CD8-positive, alpha-beta memory T cell (primary cell): ENCODE measurements at regions of chr19 and their contacts with region 1.

Region 1: DNA sequence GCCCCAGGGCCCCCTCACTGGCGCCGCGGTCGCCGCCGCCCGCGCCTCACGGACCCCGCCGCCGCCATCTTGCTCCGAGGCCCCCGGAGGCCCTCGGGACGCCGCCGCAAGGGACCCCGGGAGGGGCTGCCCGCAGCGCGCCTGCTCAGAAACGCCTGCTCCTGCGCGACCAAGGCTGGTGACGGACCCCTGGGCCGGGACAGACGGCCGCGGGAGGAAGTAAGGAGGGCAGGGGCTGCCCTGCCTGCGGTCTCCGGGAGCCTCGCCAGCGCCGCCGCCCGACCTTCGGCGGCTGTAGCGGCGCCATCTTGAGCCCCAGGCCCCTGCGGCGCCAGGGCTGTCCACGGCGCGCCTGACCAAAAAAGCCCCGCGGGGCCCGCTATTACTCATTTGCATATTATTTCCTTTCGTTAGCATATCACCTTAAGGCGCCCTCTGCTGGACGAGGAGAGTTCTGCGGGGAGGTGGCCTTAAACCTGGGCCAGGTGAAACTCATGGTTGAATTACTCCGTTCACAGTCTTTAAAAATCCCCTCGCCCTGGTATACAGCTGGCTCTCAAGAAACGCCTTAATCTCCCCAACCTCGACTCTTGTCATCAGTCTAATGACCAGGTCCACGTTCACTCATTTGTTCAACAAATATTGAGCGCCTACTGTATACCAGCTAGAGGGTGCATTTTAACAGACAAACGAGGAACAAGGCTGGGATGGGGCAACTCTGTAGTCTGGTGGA is at the start of gene REXO1:
- DNase-seq: peak; percentile 95 to 99 (median 97)
- H3K4me3 ChIP-seq: peak within 1 kb of the TSS; percentile 83
- H3K4me3 Mint-ChIP-seq: peak within 1 kb of the TSS; percentile 86 to 96 (median 88)
- H3K27ac ChIP-seq: peak within 1 kb of the TSS; percentile 94
- H3K27ac Mint-ChIP-seq: peak within 1 kb of the TSS; percentile 88 to 97 (median 93)
- H3K4me1 ChIP-seq: peaks cover 59% of the 10 kb centered on the region
- H3K4me1 Mint-ChIP-seq: peaks cover 39 to 70% (median 49%) of the 10 kb centered on the region in 3 donors
- H3K27me3 ChIP-seq: no peaks in the 10 kb centered on the region
- H3K27me3 Mint-ChIP-seq: peaks cover 0 to 3% of the 10 kb centered on the region in 2 donors
- total RNA-seq, gene REXO1: 61.0 to 63.7 TPM

Region 2: GRCh38 chr19:1837625-1838105 is 10.9 kb before region 1 on chr19:
- CTCF ChIA-PET with region 1: interaction called, 13 read pairs
- POLR2A ChIA-PET with region 1: no interaction called
- DNase-seq: peak in 4 of 5 donors; percentile 46 to 66 (median 52)
- H3K4me3 ChIP-seq: no peak overlapping the region
- H3K4me3 Mint-ChIP-seq: peak overlapping the region in 1 of 7 donors; percentile 68
- H3K27ac ChIP-seq: peak overlapping the region; percentile 70
- H3K27ac Mint-ChIP-seq: peak overlapping the region in 1 of 8 donors; percentile 14
- H3K4me1 ChIP-seq: peaks cover 7% of the 10 kb centered on the region
- H3K4me1 Mint-ChIP-seq: peaks cover 24 to 60% (median 27%) of the 10 kb centered on the region in 3 donors
- H3K27me3 ChIP-seq: no peaks in the 10 kb centered on the region
- H3K27me3 Mint-ChIP-seq: no peaks in the 10 kb centered on the region

Region 3: DNA sequence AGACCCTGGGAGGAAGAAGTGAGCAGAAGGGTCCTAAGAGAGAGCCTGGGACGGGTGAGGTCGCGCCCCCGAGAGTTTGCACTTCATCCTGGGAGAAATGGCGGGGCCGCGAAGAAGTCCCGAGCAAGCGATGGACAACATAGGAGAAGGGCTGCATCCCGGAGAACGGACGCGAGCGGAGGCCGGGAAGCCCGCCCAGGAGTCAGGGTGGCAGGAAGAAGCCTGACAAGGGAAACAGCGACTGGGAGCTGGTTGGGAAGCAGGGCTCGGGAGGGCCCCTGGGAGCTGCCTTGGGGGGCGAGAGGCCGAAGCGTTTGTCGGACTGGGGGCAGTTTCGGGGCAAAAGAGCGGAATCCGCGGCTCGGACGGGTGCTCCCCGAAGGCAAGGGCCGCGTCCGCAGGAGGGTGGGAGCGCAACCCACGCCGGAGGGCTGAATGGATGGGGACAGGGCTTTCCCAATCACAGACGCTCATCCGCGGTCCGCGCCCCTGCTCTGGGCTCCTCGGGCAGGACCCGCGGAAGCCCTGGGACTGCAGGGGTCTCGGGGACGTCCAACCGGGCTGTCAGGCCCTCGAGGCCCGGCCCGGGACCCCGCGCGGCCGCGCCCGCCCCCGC is 36.3 kb after region 1 on chr19:
- CTCF ChIA-PET with region 1: no interaction called
- POLR2A ChIA-PET with region 1: no interaction called
- DNase-seq: no peak
- H3K4me3 ChIP-seq: peak overlapping the region; percentile 70
- H3K4me3 Mint-ChIP-seq: peak overlapping the region; percentile 94 to 100 (median 99)
- H3K27ac ChIP-seq: peak overlapping the region; percentile 96
- H3K27ac Mint-ChIP-seq: peak overlapping the region; percentile 96 to 100 (median 100)
- H3K4me1 ChIP-seq: peaks cover 34% of the 10 kb centered on the region
- H3K4me1 Mint-ChIP-seq: peaks cover 26 to 44% (median 28%) of the 10 kb centered on the region in 3 donors
- H3K27me3 ChIP-seq: no peaks in the 10 kb centered on the region
- H3K27me3 Mint-ChIP-seq: peaks cover 0 to 10% of the 10 kb centered on the region in 2 donors

Region 4: DNA sequence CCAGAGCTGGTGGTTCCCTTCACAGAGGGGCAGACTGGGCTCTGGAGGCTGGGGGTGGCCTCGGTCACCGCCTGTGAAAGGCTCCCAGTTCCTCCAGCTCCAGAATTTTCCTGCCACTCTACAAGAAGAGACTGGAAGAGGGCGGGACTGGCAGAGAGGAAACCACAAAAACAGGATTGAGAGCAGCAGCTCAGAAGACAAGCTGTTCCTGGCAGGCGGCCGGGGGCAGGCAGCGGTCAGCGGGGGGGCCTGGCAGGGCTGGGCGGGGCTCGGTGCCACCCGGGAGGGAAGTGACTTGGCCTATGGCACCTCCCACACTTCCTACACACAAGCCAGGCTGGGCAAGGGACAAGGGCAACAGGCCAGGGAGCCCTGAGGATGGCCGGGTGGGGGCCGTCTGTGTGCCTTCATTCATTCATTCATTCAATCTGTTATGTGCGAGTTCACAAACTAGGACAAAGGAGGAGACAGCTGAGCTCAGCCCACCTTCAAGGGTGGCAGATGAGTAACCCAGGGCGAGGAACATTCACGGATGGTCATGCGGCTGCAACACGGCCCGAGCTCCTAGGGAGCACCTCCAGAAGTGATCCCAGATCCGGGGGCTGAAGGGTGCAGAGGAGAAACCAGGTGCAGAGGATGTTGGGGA is 183.9 kb after region 1 on chr19:
- CTCF ChIA-PET with region 1: no interaction called
- POLR2A ChIA-PET with region 1: no interaction called
- DNase-seq: peak in 2 of 5 donors; percentile 38 to 47
- H3K4me3 ChIP-seq: peak overlapping the region; percentile 44
- H3K4me3 Mint-ChIP-seq: peak overlapping the region; percentile 30 to 82 (median 61)
- H3K27ac ChIP-seq: no peak overlapping the region
- H3K27ac Mint-ChIP-seq: peak overlapping the region; percentile 61 to 97 (median 78)
- H3K4me1 ChIP-seq: peaks cover 28% of the 10 kb centered on the region
- H3K4me1 Mint-ChIP-seq: peaks cover 18 to 24% (median 22%) of the 10 kb centered on the region in 3 donors
- H3K27me3 ChIP-seq: no peaks in the 10 kb centered on the region
- H3K27me3 Mint-ChIP-seq: no peaks in the 10 kb centered on the region